Dorsolateral prefrontal cortex (tissue), 120 donors: ENCODE measurements at regions of chr12 and their contacts with region 1.

Region 1: DNA sequence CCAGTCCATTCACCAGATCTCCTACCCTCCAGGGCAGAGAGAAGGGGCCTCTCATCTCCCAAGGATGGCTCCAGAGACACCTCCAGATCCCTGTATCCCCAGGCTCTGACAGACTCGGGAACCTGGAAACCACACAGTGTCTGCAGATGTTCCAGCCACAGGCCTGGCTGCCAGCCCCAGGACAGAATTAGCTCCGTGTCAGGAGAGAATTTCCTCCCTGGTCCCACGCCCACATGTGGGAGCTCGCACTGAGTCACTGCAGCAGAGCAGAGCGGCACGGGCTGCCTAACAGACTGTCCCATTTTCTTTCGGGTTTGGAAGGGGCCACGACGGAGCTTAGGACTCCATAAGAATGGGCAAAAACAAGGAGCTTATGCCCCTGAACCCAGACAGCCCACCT is 33.6 kb downstream of the CMKLR1 start:
- DNase-seq: peak; percentile 36 to 93 (median 80)
- H3K4me3 ChIP-seq: peak overlapping the region in 9 of 59 donors; percentile 10 to 31 (median 16)
- H3K27ac ChIP-seq: peak overlapping the region in 56 of 59 donors; percentile 9 to 92 (median 73)
- H3K27me3 ChIP-seq: no peaks in the 10 kb centered on the region
- CTCF ChIP-seq: no peak

Region 2: GRCh38 chr12:108237272-108237671 is 68.2 kb before region 1 on chr12:
- intact Hi-C with region 1: no loop called
- DNase-seq: no peak
- H3K4me3 ChIP-seq: no peak overlapping the region
- H3K27ac ChIP-seq: no peak overlapping the region
- H3K27me3 ChIP-seq: peaks cover 0 to 9% (median 0%) of the 10 kb centered on the region in 45 donors
- CTCF ChIP-seq: peak in 24 of 56 donors; percentile 10 to 50 (median 23)

Region 3: GRCh38 chr12:108349278-108349688 is 43.8 kb after region 1 on chr12:
- intact Hi-C with region 1: loop called in 1 of 2 experiments (anchors 5 kb)
- DNase-seq: peak in 4 of 10 donors; percentile 35 to 67 (median 44)
- H3K4me3 ChIP-seq: no peak overlapping the region
- H3K27ac ChIP-seq: peak overlapping the region in 55 of 59 donors; percentile 1 to 93 (median 78)
- H3K27me3 ChIP-seq: no peaks in the 10 kb centered on the region
- CTCF ChIP-seq: no peak

Region 4: DNA sequence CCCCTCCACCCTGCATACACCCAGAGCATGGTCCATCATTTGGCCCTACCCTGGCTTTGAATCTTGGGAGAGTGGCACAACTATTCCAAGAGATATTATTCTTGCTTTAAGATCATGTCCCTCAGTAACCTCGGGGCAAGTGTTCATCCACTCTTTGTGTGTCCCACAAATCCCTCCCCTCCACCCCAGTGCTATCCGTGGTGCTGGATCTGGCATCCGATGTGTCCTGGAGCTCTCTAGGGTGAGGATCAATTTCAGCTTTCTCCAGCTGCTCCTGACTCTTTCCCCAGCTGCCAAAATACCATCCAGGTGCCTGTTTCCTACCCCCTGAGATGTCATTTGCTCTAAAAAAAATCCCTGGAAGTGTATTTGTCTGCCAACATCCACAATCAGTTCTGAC is 98.4 kb after region 1 on chr12:
- intact Hi-C with region 1: no loop called
- DNase-seq: no peak
- H3K4me3 ChIP-seq: no peak overlapping the region
- H3K27ac ChIP-seq: no peak overlapping the region
- H3K27me3 ChIP-seq: no peaks in the 10 kb centered on the region
- CTCF ChIP-seq: no peak

Region 5: DNA sequence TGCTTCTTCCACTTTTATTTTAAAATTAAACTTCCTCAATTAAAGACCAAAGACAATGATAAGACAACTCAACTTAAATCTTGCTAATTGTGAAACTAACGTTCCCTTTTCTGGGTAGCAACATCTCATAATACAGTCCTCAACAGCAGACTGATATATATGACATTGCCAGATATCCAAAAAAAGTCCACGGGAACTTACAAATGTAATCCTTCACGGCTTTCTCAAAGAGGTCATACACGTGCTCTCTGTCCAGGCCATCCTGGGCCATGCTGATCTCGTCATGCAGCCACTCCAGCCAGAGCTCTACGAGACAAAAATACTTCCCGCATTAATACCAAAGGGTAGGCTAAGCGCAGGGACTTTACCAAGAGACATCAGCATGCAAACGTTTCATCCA is 242.2 kb after region 1 on chr12:
- intact Hi-C with region 1: no loop called
- DNase-seq: no peak
- H3K4me3 ChIP-seq: no peak overlapping the region
- H3K27ac ChIP-seq: peak overlapping the region in 1 of 59 donors; percentile 18
- H3K27me3 ChIP-seq: no peaks in the 10 kb centered on the region
- CTCF ChIP-seq: no peak